ENCODE measurements at regions of chr5 and their contacts with region 1.

Region 1: GRCh38 chr5:136212252-136212721 is 19.3 kb upstream of the SMIM32 start:
- DNase-seq: peak; percentile 45 to 68 (median 64)
- H3K4me3 ChIP-seq: no peak overlapping the region
- H3K27ac ChIP-seq: no peak overlapping the region
- H3K4me1 ChIP-seq: no peaks in the 10 kb centered on the region
- H3K27me3 ChIP-seq: no peaks in the 10 kb centered on the region
- CTCF ChIP-seq: peak; percentile 47 to 85 (median 73)
- EP300 ChIP-seq: no peak
- POLR2A ChIP-seq: no peak

Region 2: DNA sequence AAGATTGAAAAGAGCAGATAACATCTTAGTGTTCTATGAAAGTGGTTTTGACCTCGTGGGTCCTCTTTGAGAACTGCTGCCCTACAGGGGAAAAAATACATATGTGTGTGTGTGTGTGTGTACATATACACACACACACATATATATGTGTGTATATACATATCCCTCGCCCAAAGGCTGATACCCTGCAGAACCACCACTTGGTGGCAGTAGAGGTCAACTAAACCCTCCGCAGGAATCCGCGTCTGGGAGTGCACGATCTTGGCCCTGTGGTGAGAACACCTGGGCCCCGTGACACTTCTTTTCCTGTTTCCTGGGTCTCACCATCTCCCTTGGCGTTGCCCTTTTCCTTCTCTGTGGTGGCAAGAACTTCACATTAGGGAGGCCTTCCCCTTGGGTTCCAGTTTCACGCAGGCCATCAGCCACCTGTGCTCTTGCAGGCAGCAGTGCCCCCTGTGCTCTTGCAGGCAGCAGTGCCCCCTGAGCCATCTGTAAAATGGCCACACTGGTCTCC is 324.9 kb before region 1 on chr5:
- intact Hi-C with region 1: loop called (anchors 1 to 5 kb)
- DNase-seq: peak; percentile 44 to 57 (median 52)
- H3K4me3 ChIP-seq: no peak overlapping the region
- H3K27ac ChIP-seq: no peak overlapping the region
- H3K4me1 ChIP-seq: peaks cover 9% of the 10 kb centered on the region
- H3K27me3 ChIP-seq: no peaks in the 10 kb centered on the region
- CTCF ChIP-seq: peak; percentile 60 to 69 (median 65)
- EP300 ChIP-seq: no peak
- POLR2A ChIP-seq: no peak

Region 3: GRCh38 chr5:135930029-135930948 is 282.0 kb before region 1 on chr5:
- intact Hi-C with region 1: loop called in 1 of 4 experiments (anchors 10 kb)
- DNase-seq: peak in 2 of 5 donors; percentile 15 to 34
- H3K4me3 ChIP-seq: no peak overlapping the region
- H3K27ac ChIP-seq: no peak overlapping the region
- H3K4me1 ChIP-seq: no peaks in the 10 kb centered on the region
- H3K27me3 ChIP-seq: no peaks in the 10 kb centered on the region
- CTCF ChIP-seq: no peak
- EP300 ChIP-seq: no peak
- POLR2A ChIP-seq: no peak

Region 4: DNA sequence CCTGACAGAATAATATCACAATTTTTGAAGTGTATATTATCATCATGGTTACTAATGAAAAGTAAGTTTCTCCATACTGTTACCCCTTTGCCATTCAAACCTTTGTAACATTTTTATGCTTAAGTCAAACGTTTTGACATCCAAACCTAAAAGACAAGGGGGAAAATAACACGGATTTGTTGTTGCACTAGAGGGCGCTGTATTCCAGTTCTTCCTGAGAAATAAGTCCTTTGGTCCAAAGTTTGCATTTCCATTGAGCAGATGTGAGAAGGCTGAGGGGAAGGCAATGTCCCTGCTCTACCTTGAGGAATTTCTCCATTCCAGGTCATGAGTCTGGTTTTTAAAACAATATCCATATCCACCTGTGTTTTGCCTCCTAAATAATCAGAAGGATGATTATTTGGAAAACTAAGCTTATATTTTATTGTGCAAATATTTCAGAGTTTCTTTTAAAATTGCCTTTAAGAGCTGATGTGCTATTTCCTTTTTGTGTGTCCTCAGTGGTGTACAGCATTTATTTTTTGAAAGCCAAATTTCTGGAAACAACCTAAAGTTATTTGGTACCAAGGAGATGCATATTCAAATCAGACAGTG is 267.2 kb before region 1 on chr5:
- intact Hi-C with region 1: loop called in 2 of 4 experiments (anchors 5 kb)
- DNase-seq: peak in 3 of 5 donors; percentile 25 to 65 (median 31)
- H3K4me3 ChIP-seq: no peak overlapping the region
- H3K27ac ChIP-seq: no peak overlapping the region
- H3K4me1 ChIP-seq: no peaks in the 10 kb centered on the region
- H3K27me3 ChIP-seq: no peaks in the 10 kb centered on the region
- CTCF ChIP-seq: peak; percentile 41 to 73 (median 51)
- EP300 ChIP-seq: no peak
- POLR2A ChIP-seq: no peak

Measured in ovary (tissue), 10 donors.